Keratinocyte (primary cell): ENCODE measurements at regions of chr15 and their contacts with region 1.

Region 1: GRCh38 chr15:93929375-93930094 is 301.8 kb upstream of the MCTP2 start:
- DNase-seq: peak; percentile 40
- H3K4me3 ChIP-seq: peak overlapping the region in 1 of 3 experiments; percentile 9
- H3K27ac ChIP-seq: peak overlapping the region; percentile 68
- H3K4me1 ChIP-seq: peaks cover 5% of the 10 kb centered on the region
- H3K27me3 ChIP-seq: no peaks in the 10 kb centered on the region
- CTCF ChIP-seq: no peak

Region 2: GRCh38 chr15:93617443-93617842 is 312.1 kb before region 1 on chr15:
- dilution Hi-C with region 1: no loop called
- DNase-seq: no peak
- H3K4me3 ChIP-seq: no peak overlapping the region
- H3K27ac ChIP-seq: no peak overlapping the region
- H3K4me1 ChIP-seq: no peaks in the 10 kb centered on the region
- H3K27me3 ChIP-seq: no peaks in the 10 kb centered on the region
- CTCF ChIP-seq: peak in 1 of 3 experiments; percentile 48

Region 3: GRCh38 chr15:93894438-93895036 is 35.0 kb before region 1 on chr15:
- dilution Hi-C with region 1: loop called (anchors 5 kb)
- DNase-seq: no peak
- H3K4me3 ChIP-seq: no peak overlapping the region
- H3K27ac ChIP-seq: no peak overlapping the region
- H3K4me1 ChIP-seq: peaks cover 2% of the 10 kb centered on the region
- H3K27me3 ChIP-seq: no peaks in the 10 kb centered on the region
- CTCF ChIP-seq: no peak